Activated T-helper 2 cell treated with anti-CD3 and anti-CD28 coated beads, Interferon-gamma antibody, Interleukin-2, Interleukin-4, amounts not matched to agents 10 μg/mL and 5 μg/mL and 100 μg/mL, durations not matched to agents 14 hours and 24 hours and 36 hours (primary cell): ENCODE measurements at regions of chr5 and their contacts with region 1.

Region 1: DNA sequence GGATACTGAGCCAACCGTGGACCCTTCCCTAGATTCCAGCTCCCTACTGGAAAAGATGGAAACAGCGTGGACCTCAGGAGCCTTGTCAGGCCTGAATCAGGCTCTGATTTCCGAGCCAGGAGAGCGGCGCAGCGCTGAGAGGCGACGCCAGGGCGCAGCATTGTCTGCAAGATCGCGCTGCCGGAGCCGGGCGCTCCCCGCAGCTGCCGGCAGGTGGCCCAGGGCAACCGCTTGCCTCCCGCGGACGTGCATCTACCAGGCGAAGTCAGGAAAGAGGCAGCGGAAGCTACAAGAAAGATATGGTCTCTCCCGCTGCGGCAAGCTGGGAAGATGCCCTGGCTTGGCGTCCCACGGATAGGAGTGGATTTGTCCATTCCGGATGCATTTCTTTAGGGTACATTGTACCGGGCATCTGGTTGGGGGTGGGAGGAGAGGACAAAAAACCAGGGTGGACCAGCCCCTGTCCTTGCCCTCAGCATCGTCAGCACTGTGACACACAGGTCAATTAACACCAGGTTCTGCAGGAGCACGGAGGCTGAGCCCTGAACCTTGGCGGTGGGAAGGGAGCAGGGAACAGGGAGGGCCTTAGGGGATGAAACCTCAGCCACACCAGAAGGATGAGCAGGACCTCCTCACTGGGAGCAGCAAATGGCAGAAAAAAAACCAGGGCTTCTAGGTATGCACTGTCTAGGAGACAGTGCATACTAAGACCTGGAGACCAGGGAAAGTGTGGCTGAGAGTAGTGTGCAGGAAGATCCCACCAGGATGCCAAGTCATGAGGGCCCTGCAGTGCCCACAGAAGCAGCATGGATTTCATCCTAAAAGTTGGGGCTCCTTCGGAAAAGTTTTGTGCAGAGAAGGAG is 55.9 kb downstream of the SFXN1 start:
- DNase-seq: peak; percentile 79
- H3K4me3 Mint-ChIP-seq: peak overlapping the region; percentile 45
- H3K27ac Mint-ChIP-seq: no peak overlapping the region
- H3K4me1 Mint-ChIP-seq: peaks cover 48% of the 10 kb centered on the region
- H3K27me3 Mint-ChIP-seq: no peaks in the 10 kb centered on the region

Region 2: GRCh38 chr5:175501759-175502339 is 32.5 kb before region 1 on chr5:
- intact Hi-C with region 1: no loop called
- DNase-seq: no peak
- H3K4me3 Mint-ChIP-seq: no peak overlapping the region
- H3K27ac Mint-ChIP-seq: peak overlapping the region; percentile 4
- H3K4me1 Mint-ChIP-seq: peaks cover 40% of the 10 kb centered on the region
- H3K27me3 Mint-ChIP-seq: no peaks in the 10 kb centered on the region

Region 3: GRCh38 chr5:175567954-175568353 is 33.7 kb after region 1 on chr5:
- intact Hi-C with region 1: loop called (anchors 2 kb)
- DNase-seq: no peak
- H3K4me3 Mint-ChIP-seq: no peak overlapping the region
- H3K27ac Mint-ChIP-seq: no peak overlapping the region
- H3K4me1 Mint-ChIP-seq: peaks cover 7% of the 10 kb centered on the region
- H3K27me3 Mint-ChIP-seq: peaks cover 19% of the 10 kb centered on the region

Region 4: GRCh38 chr5:175696139-175696854 is 162.0 kb after region 1 on chr5:
- intact Hi-C with region 1: loop called (anchors 1 kb)
- DNase-seq: peak; percentile 70
- H3K4me3 Mint-ChIP-seq: peak overlapping the region; percentile 13
- H3K27ac Mint-ChIP-seq: peak overlapping the region; percentile 80
- H3K4me1 Mint-ChIP-seq: peaks cover 29% of the 10 kb centered on the region
- H3K27me3 Mint-ChIP-seq: no peaks in the 10 kb centered on the region

Region 5: DNA sequence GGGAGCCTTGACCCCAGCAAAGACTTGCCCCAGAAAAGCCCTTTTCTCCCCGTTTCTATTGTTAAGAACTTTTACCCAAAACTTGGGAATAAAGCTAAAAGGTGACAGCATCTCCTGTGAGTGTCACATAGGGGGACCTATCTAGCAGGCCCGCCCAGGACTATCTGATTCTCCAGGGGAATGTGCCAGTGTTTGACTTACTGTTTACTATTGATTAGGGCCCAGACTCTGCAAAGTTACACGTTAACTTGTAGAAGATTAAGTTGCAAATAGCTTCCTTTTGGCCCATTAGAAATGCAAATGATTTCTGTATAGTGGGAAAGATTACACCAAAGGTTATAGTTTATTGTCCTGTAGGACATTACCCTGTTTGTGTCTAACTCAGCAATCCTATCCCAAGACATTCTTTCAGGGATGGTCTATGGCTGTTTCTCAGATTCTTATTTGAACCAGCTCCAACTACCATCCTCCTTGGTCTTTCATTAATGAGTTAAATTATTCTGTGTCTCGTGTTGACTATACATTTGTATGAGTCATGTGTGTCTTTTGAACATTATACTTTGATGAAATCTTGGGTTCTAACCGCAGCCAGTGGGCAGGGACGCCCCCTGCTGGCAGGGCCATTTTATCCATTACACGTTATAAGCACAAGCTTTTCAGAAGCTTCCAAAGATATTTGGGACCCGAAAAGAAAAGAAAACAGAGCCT is 184.3 kb after region 1 on chr5:
- intact Hi-C with region 1: loop called (anchors 1 kb)
- DNase-seq: peak; percentile 45
- H3K4me3 Mint-ChIP-seq: no peak overlapping the region
- H3K27ac Mint-ChIP-seq: no peak overlapping the region
- H3K4me1 Mint-ChIP-seq: peaks cover 6% of the 10 kb centered on the region
- H3K27me3 Mint-ChIP-seq: no peaks in the 10 kb centered on the region